Thyroid gland (tissue), 4 donors: ENCODE measurements at regions of chr11 and their contacts with region 1.

Region 1: GRCh38 chr11:14519917-14520746 is at the start of gene PSMA1:
- DNase-seq: peak; percentile 95 to 96
- H3K4me3 ChIP-seq: peak within 1 kb of the TSS; percentile 60 to 99 (median 97)
- H3K27ac ChIP-seq: peak within 1 kb of the TSS; percentile 76 to 86 (median 83)
- H3K4me1 ChIP-seq: peaks cover 8 to 13% of the 10 kb centered on the region in 2 donors
- H3K27me3 ChIP-seq: no peaks in the 10 kb centered on the region
- CTCF ChIP-seq: peak in 5 of 6 experiments; percentile 23 to 63 (median 56)
- POLR2A ChIP-seq: peak; percentile 16 to 81
- total RNA-seq, gene PSMA1: 100 to 148 (median 127) TPM

Region 2: DNA sequence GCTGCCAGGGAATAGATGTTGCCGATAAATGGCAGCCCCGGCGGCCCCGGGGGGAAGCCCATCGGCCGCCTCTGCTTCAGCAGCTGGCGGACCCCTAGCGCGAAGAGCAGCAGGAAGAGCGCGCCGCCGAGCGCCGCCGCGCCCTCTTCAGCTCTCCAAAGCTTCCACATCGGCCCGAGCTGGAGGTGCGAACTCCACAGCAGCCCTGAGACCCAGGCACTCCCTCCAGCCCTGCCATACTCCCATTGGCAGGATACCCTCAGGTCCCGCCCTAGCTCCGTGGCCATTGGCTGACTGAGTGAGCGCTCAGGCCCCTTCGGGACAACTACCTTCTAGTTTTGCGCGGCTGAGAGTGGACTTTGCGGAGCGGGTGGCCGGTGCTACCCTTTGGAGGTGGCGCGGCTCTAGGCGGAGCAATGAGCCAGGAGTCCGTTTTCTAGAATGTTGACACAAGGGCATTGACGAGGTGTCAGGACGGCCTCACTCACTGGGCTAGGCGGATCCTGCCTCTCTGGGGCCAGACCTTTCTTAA is 372.0 kb after region 1 on chr11 and contains the start of gene CYP2R1:
- intact Hi-C with region 1: loop called (anchors 5 kb)
- DNase-seq: peak; percentile 94 to 96
- H3K4me3 ChIP-seq: peak within 1 kb of the TSS; percentile 22 to 79 (median 38)
- H3K27ac ChIP-seq: peak within 1 kb of the TSS; percentile 81 to 96 (median 89)
- H3K4me1 ChIP-seq: peaks cover 7 to 9% of the 10 kb centered on the region in 2 donors
- H3K27me3 ChIP-seq: no peaks in the 10 kb centered on the region
- CTCF ChIP-seq: no peak
- POLR2A ChIP-seq: peak in 1 of 2 donors; percentile 64
- total RNA-seq, gene CYP2R1: 10.2 to 24.1 (median 19.8) TPM

Region 3: GRCh38 chr11:14980854-14981253 is 460.7 kb after region 1 on chr11:
- intact Hi-C with region 1: no loop called
- DNase-seq: no peak
- H3K4me3 ChIP-seq: no peak overlapping the region
- H3K27ac ChIP-seq: no peak overlapping the region
- H3K4me1 ChIP-seq: peaks cover 0 to 3% of the 10 kb centered on the region in 2 donors
- H3K27me3 ChIP-seq: peaks cover 5% of the 10 kb centered on the region
- CTCF ChIP-seq: no peak
- POLR2A ChIP-seq: no peak